Gastrocnemius medialis (tissue), 4 donors: ENCODE measurements at regions of chr5 and their contacts with region 1.

Region 1: DNA sequence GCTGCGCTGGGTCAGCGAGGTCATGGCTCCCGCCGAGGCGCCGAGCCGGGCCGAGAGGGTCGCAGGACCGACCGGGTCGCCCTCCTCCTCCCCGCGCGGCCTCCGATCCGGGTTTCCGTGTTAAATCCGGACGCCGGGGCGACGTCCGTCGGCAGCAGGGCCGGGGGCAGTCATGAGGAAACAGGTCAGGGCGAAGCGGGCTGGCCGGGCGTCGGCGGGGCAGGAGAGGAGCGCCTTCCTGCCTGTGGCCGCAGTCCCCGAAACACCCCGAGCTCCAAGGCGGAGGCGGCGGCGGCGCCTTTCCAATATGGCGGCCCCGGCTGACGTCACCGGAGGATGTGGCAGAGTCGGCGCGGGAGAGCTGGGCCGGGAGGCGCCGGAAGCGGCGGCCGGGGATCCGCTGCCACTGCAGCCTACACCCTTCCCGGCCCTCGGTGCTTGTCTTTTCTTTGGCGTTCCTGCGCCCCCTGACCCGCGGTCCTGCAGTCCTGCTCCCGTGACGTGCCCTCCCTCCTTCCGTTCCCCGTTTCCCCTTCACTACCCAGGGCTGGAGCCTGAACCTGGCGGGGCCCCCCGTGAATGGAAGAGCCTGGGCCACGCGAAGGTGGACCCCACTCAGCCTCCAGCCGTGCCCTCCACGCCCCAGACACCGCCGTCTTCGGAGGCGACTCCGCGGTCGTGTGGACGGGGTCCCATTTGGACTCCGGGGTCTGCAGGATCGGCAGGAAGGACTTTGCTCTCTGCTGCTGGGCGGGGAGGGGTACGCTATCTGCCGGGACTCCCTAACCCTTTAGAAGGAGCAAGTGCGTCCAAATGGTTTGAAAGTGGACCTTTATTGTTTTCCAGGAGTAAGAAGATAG is at the start of gene GOLPH3:
- DNase-seq: peak; percentile 86 to 87
- ATAC-seq: peak; percentile 82 to 83
- H3K4me3 ChIP-seq: peak within 1 kb of the TSS; percentile 73 to 99 (median 82)
- H3K27ac ChIP-seq: peak within 1 kb of the TSS; percentile 94 to 100 (median 97)
- H3K4me1 ChIP-seq: peaks cover 19 to 39% of the 10 kb centered on the region in 2 donors
- H3K27me3 ChIP-seq: no peaks in the 10 kb centered on the region
- CTCF ChIP-seq: peak in 2 of 5 experiments; percentile 33 to 36
- POLR2A ChIP-seq: peak; percentile 91
- total RNA-seq, gene GOLPH3: 34.9 to 77.8 (median 46.1) TPM

Region 2: GRCh38 chr5:31531888-31532710 is 642.1 kb before region 1 on chr5 and contains the starts of genes C5orf22 and DROSHA:
- in situ Hi-C with region 1: no loop called
- intact Hi-C with region 1: loop called (anchors 2 kb)
- DNase-seq: peak; percentile 95
- ATAC-seq: peak; percentile 99 to 100
- H3K4me3 ChIP-seq: peak within 1 kb of the TSS; percentile 76 to 97 (median 86)
- H3K27ac ChIP-seq: peak within 1 kb of the TSS; percentile 66 to 92 (median 90)
- H3K4me1 ChIP-seq: peaks cover 21 to 34% of the 10 kb centered on the region in 2 donors
- H3K27me3 ChIP-seq: no peaks in the 10 kb centered on the region
- CTCF ChIP-seq: peak in 2 of 5 experiments; percentile 12
- POLR2A ChIP-seq: peak; percentile 64 to 76
- total RNA-seq, gene C5orf22: 24.1 to 27.0 (median 25.2) TPM
- total RNA-seq, gene DROSHA: 9.2 to 28.8 (median 28.4) TPM

Region 3: GRCh38 chr5:32223946-32224608 is 49.8 kb after region 1 on chr5:
- in situ Hi-C with region 1: no loop called
- intact Hi-C with region 1: loop called (anchors 2 kb)
- DNase-seq: peak in 1 of 2 donors; percentile 40
- ATAC-seq: peak in 1 of 2 donors; percentile 65
- H3K4me3 ChIP-seq: no peak overlapping the region
- H3K27ac ChIP-seq: peak overlapping the region; percentile 77 to 94 (median 80)
- H3K4me1 ChIP-seq: peaks cover 20 to 23% of the 10 kb centered on the region in 2 donors
- H3K27me3 ChIP-seq: no peaks in the 10 kb centered on the region
- CTCF ChIP-seq: no peak
- POLR2A ChIP-seq: no peak

Region 4: GRCh38 chr5:32312647-32313523 is 138.6 kb after region 1 on chr5 and contains the start of gene MTMR12:
- in situ Hi-C with region 1: loop called in 1 of 4 experiments (anchors 10 kb)
- intact Hi-C with region 1: loop called (anchors 2 kb)
- DNase-seq: peak; percentile 99
- ATAC-seq: peak; percentile 97 to 98
- H3K4me3 ChIP-seq: peak within 1 kb of the TSS; percentile 69 to 88 (median 82)
- H3K27ac ChIP-seq: peak within 1 kb of the TSS; percentile 85 to 98 (median 92)
- H3K4me1 ChIP-seq: peaks cover 10 to 33% of the 10 kb centered on the region in 2 donors
- H3K27me3 ChIP-seq: no peaks in the 10 kb centered on the region
- CTCF ChIP-seq: no peak
- POLR2A ChIP-seq: peak; percentile 88 to 91
- total RNA-seq, gene MTMR12: 6.4 to 11.5 (median 10.6) TPM

Region 5: GRCh38 chr5:32444431-32445286 is 270.4 kb after region 1 on chr5 and contains the start of gene ZFR:
- in situ Hi-C with region 1: no loop called
- intact Hi-C with region 1: loop called (anchors 2 kb)
- DNase-seq: peak; percentile 88 to 92
- ATAC-seq: peak; percentile 90 to 94
- H3K4me3 ChIP-seq: peak within 1 kb of the TSS; percentile 68 to 88 (median 76)
- H3K27ac ChIP-seq: peak within 1 kb of the TSS; percentile 89 to 97 (median 92)
- H3K4me1 ChIP-seq: peaks cover 26 to 34% of the 10 kb centered on the region in 2 donors
- H3K27me3 ChIP-seq: no peaks in the 10 kb centered on the region
- CTCF ChIP-seq: no peak
- POLR2A ChIP-seq: peak; percentile 85 to 86
- total RNA-seq, gene ZFR: 84.0 to 109 (median 89.4) TPM